ENCODE measurements at regions of chr5 and their contacts with region 1.

Region 1: GRCh38 chr5:93322974-93323860 is 257.8 kb downstream of the NR2F1-AS1 start:
- DNase-seq: no peak
- H3K4me3 Mint-ChIP-seq: no peak overlapping the region
- H3K27ac Mint-ChIP-seq: no peak overlapping the region
- H3K4me1 Mint-ChIP-seq: no peaks in the 10 kb centered on the region
- H3K27me3 Mint-ChIP-seq: no peaks in the 10 kb centered on the region
- CTCF ChIP-seq: no peak

Region 2: GRCh38 chr5:93092349-93093105 is 230.7 kb before region 1 on chr5:
- CTCF ChIA-PET with region 1: no interaction called
- POLR2A ChIA-PET with region 1: no interaction called
- intact Hi-C with region 1: loop called (anchors 10 kb)
- DNase-seq: peak; percentile 40
- H3K4me3 Mint-ChIP-seq: no peak overlapping the region
- H3K27ac Mint-ChIP-seq: no peak overlapping the region
- H3K4me1 Mint-ChIP-seq: no peaks in the 10 kb centered on the region
- H3K27me3 Mint-ChIP-seq: no peaks in the 10 kb centered on the region
- CTCF ChIP-seq: peak; percentile 35

Region 3: GRCh38 chr5:93461756-93462155 is 138.5 kb after region 1 on chr5:
- CTCF ChIA-PET with region 1: no interaction called
- POLR2A ChIA-PET with region 1: no interaction called
- intact Hi-C with region 1: no loop called
- DNase-seq: no peak
- H3K4me3 Mint-ChIP-seq: no peak overlapping the region
- H3K27ac Mint-ChIP-seq: no peak overlapping the region
- H3K4me1 Mint-ChIP-seq: no peaks in the 10 kb centered on the region
- H3K27me3 Mint-ChIP-seq: no peaks in the 10 kb centered on the region
- CTCF ChIP-seq: no peak

Measured in MCF 10A (cell line).